MCF 10A (cell line): ENCODE measurements at regions of chr6 and their contacts with region 1.

Region 1: GRCh38 chr6:35731736-35732532 is 4.9 kb upstream of the ARMC12 start:
- DNase-seq: peak; percentile 97
- H3K4me3 Mint-ChIP-seq: peak overlapping the region; percentile 73
- H3K27ac Mint-ChIP-seq: peak overlapping the region; percentile 81
- H3K4me1 Mint-ChIP-seq: peaks cover 55% of the 10 kb centered on the region
- H3K27me3 Mint-ChIP-seq: no peaks in the 10 kb centered on the region
- CTCF ChIP-seq: no peak

Region 2: GRCh38 chr6:35522660-35523658 is 209.0 kb before region 1 on chr6:
- CTCF ChIA-PET with region 1: interaction called, 90 read pairs
- POLR2A ChIA-PET with region 1: interaction called, 9 read pairs
- intact Hi-C with region 1: loop called (anchors 1 kb)
- DNase-seq: peak; percentile 75
- H3K4me3 Mint-ChIP-seq: no peak overlapping the region
- H3K27ac Mint-ChIP-seq: no peak overlapping the region
- H3K4me1 Mint-ChIP-seq: peaks cover 6% of the 10 kb centered on the region
- H3K27me3 Mint-ChIP-seq: no peaks in the 10 kb centered on the region
- CTCF ChIP-seq: peak; percentile 98

Region 3: DNA sequence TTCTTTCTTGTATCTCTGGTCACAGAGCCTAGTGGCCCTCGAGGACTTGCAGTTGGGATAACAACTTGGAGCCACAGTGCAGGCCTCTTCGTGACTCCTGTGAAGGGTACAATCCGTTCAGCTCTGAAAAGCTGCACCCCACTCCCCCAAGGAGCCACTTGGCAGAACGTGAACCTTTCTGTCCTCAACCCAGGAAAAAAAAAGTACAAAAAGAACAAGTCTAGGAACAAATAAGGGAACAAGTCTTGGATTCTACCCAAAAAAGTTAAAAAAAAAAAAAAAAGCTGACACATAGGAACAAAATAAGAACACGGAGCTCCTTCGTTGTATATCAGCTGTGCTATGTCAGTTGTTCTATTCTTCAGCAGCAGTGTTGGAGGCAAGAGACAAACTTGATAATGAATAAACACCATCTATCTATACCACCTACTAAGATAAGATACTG is 141.3 kb before region 1 on chr6:
- CTCF ChIA-PET with region 1: interaction called, 19 read pairs
- POLR2A ChIA-PET with region 1: interaction called, 294 read pairs
- intact Hi-C with region 1: no loop called
- DNase-seq: no peak
- H3K4me3 Mint-ChIP-seq: peak overlapping the region; percentile 47
- H3K27ac Mint-ChIP-seq: peak overlapping the region; percentile 79
- H3K4me1 Mint-ChIP-seq: peaks cover 40% of the 10 kb centered on the region
- H3K27me3 Mint-ChIP-seq: no peaks in the 10 kb centered on the region
- CTCF ChIP-seq: no peak

Region 4: GRCh38 chr6:35640017-35640664 is 91.8 kb before region 1 on chr6:
- CTCF ChIA-PET with region 1: interaction called, 22 read pairs
- POLR2A ChIA-PET with region 1: interaction called, 37 read pairs
- intact Hi-C with region 1: no loop called
- DNase-seq: no peak
- H3K4me3 Mint-ChIP-seq: no peak overlapping the region
- H3K27ac Mint-ChIP-seq: peak overlapping the region; percentile 19
- H3K4me1 Mint-ChIP-seq: peaks cover 37% of the 10 kb centered on the region
- H3K27me3 Mint-ChIP-seq: no peaks in the 10 kb centered on the region
- CTCF ChIP-seq: no peak

Region 5: DNA sequence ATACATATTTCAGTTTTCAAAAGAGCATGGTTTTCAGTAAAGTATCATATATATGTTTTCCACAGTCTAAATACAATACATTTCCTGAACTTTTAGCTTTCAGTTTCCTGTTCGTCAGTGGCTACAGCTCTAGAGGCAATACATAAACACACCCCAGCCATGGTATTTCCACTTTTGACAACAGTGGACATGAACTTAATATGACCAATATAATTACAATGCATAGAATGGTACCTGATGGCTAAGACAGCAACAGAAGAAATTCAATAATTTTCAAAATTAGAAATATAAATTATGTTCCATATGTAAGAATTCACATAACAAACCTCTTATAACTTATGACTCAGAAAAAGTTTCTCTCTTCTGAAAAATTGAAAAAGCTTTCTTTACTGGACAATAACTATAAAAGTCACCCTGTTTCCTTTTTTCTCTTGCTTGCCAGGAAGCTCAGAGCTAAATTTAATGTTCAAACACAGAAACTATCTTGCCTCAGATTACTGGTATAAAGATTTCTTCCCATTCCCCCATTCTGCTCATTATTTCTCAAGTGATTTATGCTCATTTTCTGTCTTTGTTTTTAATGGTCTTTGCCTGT is 62.4 kb before region 1 on chr6:
- CTCF ChIA-PET with region 1: interaction called, 5 read pairs
- POLR2A ChIA-PET with region 1: interaction called, 1,351 read pairs
- intact Hi-C with region 1: no loop called
- DNase-seq: no peak
- H3K4me3 Mint-ChIP-seq: peak overlapping the region; percentile 28
- H3K27ac Mint-ChIP-seq: peak overlapping the region; percentile 54
- H3K4me1 Mint-ChIP-seq: peaks cover 26% of the 10 kb centered on the region
- H3K27me3 Mint-ChIP-seq: no peaks in the 10 kb centered on the region
- CTCF ChIP-seq: no peak

Region 6: DNA sequence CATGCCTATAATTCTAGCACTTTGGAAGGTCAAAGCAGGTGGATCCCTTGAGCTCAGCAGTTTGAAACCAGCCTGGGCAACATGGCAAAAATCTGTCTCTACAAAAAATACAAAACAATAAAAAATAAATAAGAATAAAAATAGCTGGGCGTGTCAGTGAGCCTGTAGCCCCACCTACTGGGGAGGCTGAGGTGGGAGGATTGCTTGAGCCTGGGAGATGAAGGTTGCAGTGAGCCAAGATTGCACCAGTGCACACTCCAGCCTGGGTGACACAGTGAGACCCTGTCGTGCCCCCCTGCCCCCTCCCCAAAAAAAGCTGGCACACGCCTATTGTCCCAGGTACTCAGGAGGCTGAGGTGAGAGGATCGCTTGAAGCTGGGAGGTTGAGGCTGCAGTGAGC is 224.0 kb after region 1 on chr6:
- CTCF ChIA-PET with region 1: no interaction called
- POLR2A ChIA-PET with region 1: no interaction called
- intact Hi-C with region 1: loop called (anchors 10 kb)
- DNase-seq: peak; percentile 11
- H3K4me3 Mint-ChIP-seq: no peak overlapping the region
- H3K27ac Mint-ChIP-seq: no peak overlapping the region
- H3K4me1 Mint-ChIP-seq: peaks cover 40% of the 10 kb centered on the region
- H3K27me3 Mint-ChIP-seq: peaks cover 27% of the 10 kb centered on the region
- CTCF ChIP-seq: peak; percentile 28